ENCODE measurements at regions of chr14 and their contacts with region 1.

Region 1: GRCh38 chr14:60349663-60350365 is 100.8 kb downstream of the PPM1A start:
- DNase-seq: peak in 4 of 10 donors; percentile 5 to 83 (median 24)

Region 2: DNA sequence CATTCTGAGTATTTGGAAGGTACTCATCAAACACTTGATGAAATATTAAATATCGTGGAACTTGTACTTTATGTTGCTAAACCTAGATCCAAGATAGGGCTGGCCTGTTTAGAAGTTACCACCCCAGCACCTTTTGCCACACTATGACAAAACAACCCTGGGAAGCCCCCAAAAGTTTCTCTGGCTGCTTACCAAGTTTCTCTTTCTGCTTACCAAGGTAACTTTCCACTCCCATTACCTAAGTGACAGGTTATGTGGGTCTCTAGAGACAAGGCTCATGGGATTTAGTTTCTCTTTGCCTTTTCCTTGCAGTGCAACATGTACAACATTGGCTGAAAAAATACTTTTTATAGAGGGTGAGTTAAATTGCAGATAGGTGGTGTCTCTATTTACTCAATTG is 129.7 kb before region 1 on chr14:
- intact Hi-C with region 1: no loop called
- DNase-seq: no peak

Region 3: DNA sequence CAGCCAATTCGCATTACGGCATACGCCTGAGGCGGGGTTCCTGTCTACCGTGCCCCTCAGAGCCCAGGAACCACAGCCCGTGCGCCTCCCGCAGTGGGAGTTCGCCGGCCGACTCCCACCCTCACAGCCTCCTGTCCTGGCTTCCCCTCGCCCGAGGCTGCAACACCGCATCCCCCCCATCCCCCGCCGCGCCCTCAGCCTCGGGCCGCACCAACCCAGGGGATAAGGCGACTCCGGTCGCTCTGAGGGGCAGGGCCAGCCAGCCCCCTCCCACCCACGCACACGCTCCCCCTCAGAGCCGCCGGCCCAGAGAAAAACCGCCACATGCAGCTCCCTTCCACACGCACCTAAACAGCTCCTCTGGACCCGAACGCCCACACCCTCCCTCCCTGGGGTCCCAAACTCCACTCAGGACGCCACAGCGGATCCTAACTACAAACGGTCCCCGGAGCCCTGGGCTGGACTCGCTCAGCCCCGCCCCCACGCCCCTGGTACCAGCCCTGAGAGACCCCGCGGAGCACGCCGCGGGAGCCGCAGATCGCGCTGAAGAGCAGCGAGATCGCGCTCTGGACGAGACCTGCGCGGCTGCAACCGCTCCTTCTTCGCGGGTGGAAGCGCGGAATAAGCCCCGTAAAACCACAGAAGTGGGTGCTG is 135.9 kb after region 1 on chr14 and contains the start of gene C14orf39:
- intact Hi-C with region 1: loop called (anchors 10 kb)
- DNase-seq: no peak

Region 4: DNA sequence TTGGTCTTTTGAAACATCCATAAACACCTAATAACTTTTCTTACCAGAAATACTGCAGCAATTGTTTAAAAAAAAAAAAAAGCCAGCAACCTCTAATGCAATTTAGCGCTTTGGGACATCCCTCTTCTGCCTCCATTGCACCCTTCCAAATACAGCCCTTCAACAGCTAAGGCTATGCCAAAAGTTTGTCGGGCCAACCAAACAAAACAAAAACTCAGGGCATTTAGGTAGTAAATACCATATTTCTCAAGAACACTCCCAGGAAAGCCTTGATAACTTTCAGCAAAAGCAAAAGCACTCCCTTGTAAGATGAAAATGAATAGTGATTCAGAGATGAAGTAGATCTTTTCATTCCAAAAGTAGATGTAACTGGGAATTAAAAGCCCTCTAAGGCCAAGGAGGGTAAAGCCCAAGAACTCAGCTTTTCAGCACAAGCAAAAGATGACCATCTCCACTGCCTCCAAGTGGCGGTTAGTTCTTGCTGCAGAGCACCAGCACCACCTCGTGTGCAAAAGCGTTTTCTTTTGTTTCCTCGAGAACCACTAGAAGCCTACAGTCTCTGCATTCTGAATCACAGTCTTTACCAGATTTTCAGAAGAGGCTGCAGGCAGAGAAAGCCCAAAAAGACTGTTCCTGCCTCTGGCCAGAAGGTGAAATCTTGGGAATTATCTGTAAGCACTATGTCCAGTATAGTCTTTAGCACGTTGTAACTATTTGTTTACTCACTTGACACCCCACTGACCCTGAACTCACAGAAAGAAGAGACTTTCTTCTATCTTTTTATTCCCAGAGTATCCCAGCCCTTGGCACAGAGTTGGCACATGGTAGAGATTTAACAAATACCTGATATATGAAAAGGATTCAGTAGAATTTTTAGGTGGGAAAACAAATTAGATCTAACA is 212.3 kb after region 1 on chr14:
- intact Hi-C with region 1: loop called (anchors 1 kb)
- DNase-seq: peak in 9 of 10 donors; percentile 19 to 89 (median 42)

Region 5: DNA sequence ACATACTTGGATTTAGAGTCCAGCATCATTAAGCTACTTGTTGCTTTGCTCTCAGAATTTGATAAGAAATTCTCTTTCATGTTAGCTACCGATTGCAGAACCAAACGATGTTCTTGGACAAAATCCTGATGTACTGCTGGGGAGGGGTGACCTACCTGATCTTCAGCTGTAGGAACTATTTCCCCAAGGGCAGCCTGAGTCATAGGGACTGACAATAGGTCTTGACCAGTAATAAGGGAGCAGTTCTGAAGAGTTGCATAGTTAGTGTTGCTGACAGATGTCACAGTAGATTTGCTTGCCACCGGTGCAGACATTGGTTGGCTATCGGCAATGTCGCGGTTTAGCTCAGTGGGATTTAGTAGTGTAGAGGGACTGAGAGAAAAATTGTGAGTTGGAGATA is 363.7 kb after region 1 on chr14:
- intact Hi-C with region 1: no loop called
- DNase-seq: no peak